ENCODE measurements at regions of chr17 and their contacts with region 1.

Region 1: DNA sequence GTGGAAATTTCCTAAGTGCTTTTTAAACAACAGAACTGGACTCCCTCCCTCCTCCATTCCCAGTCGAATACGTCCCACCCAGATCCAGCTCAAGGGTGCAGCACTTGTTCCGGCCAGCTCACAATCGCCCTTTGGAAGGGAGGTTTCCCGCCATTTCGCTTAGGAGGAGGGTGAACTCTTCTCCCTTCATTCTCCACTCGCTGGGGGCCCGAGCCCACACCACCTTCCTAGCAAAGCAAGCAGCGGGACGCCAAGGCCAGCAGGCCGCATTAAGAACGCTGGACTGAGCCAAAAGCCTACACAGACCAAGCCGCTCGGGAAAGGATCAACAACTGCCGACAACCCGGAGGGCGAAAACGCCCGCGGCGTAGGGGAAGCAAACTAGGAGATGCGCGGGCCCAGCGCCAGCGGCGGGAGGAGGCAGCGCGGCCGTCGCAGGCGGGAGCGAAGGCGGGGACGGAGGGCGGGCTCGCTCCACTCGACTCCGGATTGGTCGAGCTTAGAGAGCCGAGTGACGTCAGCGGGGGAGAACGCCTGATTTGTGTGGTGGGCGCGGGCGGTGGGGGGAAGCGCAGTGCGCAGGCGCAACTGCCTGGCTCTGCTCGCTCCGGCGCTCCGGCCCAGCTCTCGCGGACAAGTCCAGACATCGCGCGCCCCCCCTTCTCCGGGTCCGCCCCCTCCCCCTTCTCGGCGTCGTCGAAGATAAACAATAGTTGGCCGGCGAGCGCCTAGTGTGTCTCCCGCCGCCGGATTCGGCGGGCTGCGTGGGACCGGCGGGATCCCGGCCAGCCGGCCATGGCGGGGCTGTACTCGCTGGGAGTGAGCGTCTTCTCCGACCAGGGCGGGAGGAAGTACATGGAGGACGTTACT is at the start of gene PPM1D:
- DNase-seq: peak; percentile 100
- ATAC-seq: peak; percentile 97 to 98 (median 97)
- H3K4me3 ChIP-seq: peak within 1 kb of the TSS; percentile 67 to 98 (median 92)
- H3K27ac ChIP-seq: peak within 1 kb of the TSS; percentile 89 to 100 (median 97)
- H3K4me1 ChIP-seq: peaks cover 0 to 50% (median 18%) of the 10 kb centered on the region in 12 donors
- H3K27me3 ChIP-seq: no peaks in the 10 kb centered on the region
- CTCF ChIP-seq: no peak
- POLR2A ChIP-seq: peak; percentile 21 to 96
- total RNA-seq, gene PPM1D: 6.2 to 11.4 (median 7.7) TPM

Region 2: DNA sequence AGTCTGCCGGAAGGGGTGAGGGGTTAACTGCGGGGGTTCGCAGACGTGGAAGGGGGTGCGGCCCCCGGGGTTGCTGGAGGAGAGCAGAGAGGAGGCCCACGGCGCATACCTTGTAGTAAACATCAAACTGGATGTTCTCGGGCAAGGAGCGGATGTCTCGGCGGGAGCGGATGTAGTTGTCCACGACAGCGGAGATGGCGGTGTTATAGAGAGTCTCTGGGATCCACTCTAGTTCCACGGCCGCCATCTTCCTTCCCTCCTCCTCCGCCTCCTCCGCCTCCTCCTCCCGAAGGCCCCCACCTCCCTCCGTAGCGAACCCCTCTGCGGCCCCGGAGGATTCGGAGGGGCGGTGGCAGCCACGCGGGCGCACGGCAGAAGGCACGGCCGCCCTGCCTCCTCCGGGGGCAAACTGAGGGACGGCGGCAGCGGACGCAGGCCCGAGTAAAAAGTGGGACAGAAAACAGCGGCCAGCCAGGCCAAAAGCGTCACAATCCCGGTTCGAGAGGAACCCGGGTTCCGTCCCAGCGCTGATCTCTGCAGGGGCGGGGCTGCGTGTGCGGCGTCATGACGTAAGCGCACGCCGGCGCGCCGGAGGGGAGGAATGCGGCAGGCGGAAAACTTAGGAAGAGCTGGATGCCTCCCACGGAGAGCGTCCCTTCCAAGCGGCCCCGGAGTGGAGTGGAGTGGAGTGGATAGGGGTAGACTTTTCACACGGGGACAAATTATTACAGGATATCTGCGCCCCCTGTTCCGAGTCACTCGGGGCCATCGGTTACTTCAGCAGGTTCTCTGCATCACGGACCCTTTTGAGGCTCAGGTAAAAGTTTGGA is 74.0 kb before region 1 on chr17 and contains the start of gene APPBP2:
- intact Hi-C with region 1: loop called in 4 of 10 experiments (anchors 2 to 5 kb)
- DNase-seq: peak; percentile 88 to 92 (median 91)
- ATAC-seq: peak; percentile 97 to 99 (median 98)
- H3K4me3 ChIP-seq: peak within 1 kb of the TSS; percentile 54 to 96 (median 84)
- H3K27ac ChIP-seq: peak within 1 kb of the TSS; percentile 93 to 100 (median 99)
- H3K4me1 ChIP-seq: peaks cover 3 to 46% (median 29%) of the 10 kb centered on the region in 12 donors
- H3K27me3 ChIP-seq: no peaks in the 10 kb centered on the region
- CTCF ChIP-seq: no peak
- POLR2A ChIP-seq: peak in 1 of 2 donors; percentile 89
- total RNA-seq, gene APPBP2: 9.9 to 28.7 (median 20.0) TPM

Region 3: GRCh38 chr17:60577147-60577915 is 22.5 kb before region 1 on chr17:
- intact Hi-C with region 1: loop called in 2 of 10 experiments (anchors 2 kb)
- DNase-seq: peak in 3 of 5 donors; percentile 32 to 49 (median 37)
- ATAC-seq: peak; percentile 71 to 81 (median 78)
- H3K4me3 ChIP-seq: peak overlapping the region in 10 of 12 donors; percentile 23 to 53 (median 42)
- H3K27ac ChIP-seq: peak overlapping the region in 11 of 12 donors; percentile 23 to 89 (median 67)
- H3K4me1 ChIP-seq: peaks cover 0 to 58% (median 10%) of the 10 kb centered on the region in 12 donors
- H3K27me3 ChIP-seq: no peaks in the 10 kb centered on the region
- CTCF ChIP-seq: peak; percentile 12 to 61 (median 43)
- POLR2A ChIP-seq: no peak

Region 4: GRCh38 chr17:60677308-60678124 is 77.7 kb after region 1 on chr17 and contains the start of gene BCAS3:
- intact Hi-C with region 1: loop called in 1 of 10 experiments (anchors 1 kb)
- DNase-seq: peak; percentile 98 to 99 (median 99)
- ATAC-seq: peak; percentile 99
- H3K4me3 ChIP-seq: peak within 1 kb of the TSS; percentile 63 to 96 (median 82)
- H3K27ac ChIP-seq: peak within 1 kb of the TSS in 11 of 12 donors; percentile 40 to 86 (median 78)
- H3K4me1 ChIP-seq: peaks cover 0 to 18% (median 8%) of the 10 kb centered on the region in 12 donors
- H3K27me3 ChIP-seq: no peaks in the 10 kb centered on the region
- CTCF ChIP-seq: no peak
- POLR2A ChIP-seq: peak; percentile 83 to 98
- total RNA-seq, gene BCAS3: 10.6 to 23.5 (median 18.3) TPM

Measured in heart left ventricle (tissue), 16 donors.